ENCODE measurements at regions of chr11 and their contacts with region 1.

Region 1: GRCh38 chr11:65329944-65330403 is 3.7 kb upstream of the DPF2 start:
- DNase-seq: peak; percentile 51 to 79 (median 75)
- ATAC-seq: peak; percentile 52
- H3K4me3 ChIP-seq: no peak overlapping the region
- H3K4me3 Mint-ChIP-seq: peak overlapping the region in 3 of 10 donors; percentile 26 to 52 (median 51)
- H3K27ac ChIP-seq: no peak overlapping the region
- H3K27ac Mint-ChIP-seq: peak overlapping the region in 6 of 9 donors; percentile 32 to 81 (median 51)
- H3K4me1 ChIP-seq: peaks cover 7 to 14% of the 10 kb centered on the region in 2 donors
- H3K4me1 Mint-ChIP-seq: peaks cover 7 to 22% (median 17%) of the 10 kb centered on the region in 7 donors
- H3K27me3 ChIP-seq: no peaks in the 10 kb centered on the region
- H3K27me3 Mint-ChIP-seq: peaks cover 0 to 5% (median 0%) of the 10 kb centered on the region in 5 donors

Region 2: GRCh38 chr11:65204646-65205601 is 125.0 kb before region 1 on chr11:
- CTCF ChIA-PET with region 1: interaction called, 5 read pairs
- POLR2A ChIA-PET with region 1: no interaction called
- intact Hi-C with region 1: loop called in 1 of 2 experiments (anchors 1 kb)
- DNase-seq: peak in 8 of 9 donors; percentile 33 to 71 (median 52)
- ATAC-seq: peak; percentile 75
- H3K4me3 ChIP-seq: no peak overlapping the region
- H3K4me3 Mint-ChIP-seq: no peak overlapping the region
- H3K27ac ChIP-seq: no peak overlapping the region
- H3K27ac Mint-ChIP-seq: peak overlapping the region in 2 of 9 donors; percentile 30 to 65
- H3K4me1 ChIP-seq: no peaks in the 10 kb centered on the region
- H3K4me1 Mint-ChIP-seq: peaks cover 0 to 13% (median 5%) of the 10 kb centered on the region in 7 donors
- H3K27me3 ChIP-seq: no peaks in the 10 kb centered on the region
- H3K27me3 Mint-ChIP-seq: no peaks in the 10 kb centered on the region

Region 3: DNA sequence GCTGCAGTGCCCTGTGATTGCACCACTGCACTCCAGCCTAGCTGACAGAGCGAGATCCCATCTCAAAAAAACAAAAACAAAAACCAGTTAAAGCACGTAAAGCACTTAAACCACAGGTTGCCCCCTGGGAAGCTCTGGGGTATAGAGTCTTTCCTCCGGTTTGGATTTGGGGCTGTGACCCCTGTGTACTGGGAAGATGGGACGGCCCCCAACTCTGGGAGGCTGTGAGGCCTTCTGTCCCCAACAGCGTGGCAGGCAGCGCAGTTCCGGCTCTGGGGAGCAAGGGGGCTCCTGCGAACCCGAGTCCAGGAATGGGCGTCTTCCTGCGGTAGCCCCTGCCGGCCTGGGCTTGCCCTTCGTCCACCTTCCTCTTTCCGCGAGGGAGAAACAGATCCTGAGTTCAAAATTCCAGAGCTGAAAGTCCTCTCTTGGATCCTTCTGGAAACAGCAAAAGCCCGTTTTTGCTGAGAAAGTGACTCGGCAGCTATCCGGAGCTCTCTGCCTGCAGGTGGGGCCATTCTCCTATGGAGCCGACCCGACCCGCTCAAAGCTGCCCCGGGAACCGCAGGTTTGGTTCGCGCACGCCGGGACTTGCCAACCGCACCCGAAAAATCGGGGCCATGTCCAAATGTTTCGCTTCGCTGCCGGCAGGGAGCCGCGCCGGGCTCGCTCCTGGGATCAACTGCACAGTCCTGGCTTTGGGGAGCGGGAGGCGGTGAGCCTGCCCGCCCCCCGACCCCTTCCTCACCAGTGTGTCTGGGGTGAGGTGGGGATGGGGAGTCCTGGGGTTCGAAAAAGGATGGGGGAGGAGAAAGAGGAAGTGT is 104.5 kb before region 1 on chr11:
- CTCF ChIA-PET with region 1: interaction called, 19 read pairs
- POLR2A ChIA-PET with region 1: no interaction called
- intact Hi-C with region 1: loop called (anchors 1 kb)
- DNase-seq: peak; percentile 26 to 67 (median 56)
- ATAC-seq: peak; percentile 82
- H3K4me3 ChIP-seq: peak overlapping the region; percentile 48
- H3K4me3 Mint-ChIP-seq: peak overlapping the region; percentile 76 to 86 (median 79)
- H3K27ac ChIP-seq: no peak overlapping the region
- H3K27ac Mint-ChIP-seq: no peak overlapping the region
- H3K4me1 ChIP-seq: peaks cover 0 to 5% of the 10 kb centered on the region in 2 donors
- H3K4me1 Mint-ChIP-seq: peaks cover 6 to 15% (median 8%) of the 10 kb centered on the region in 7 donors
- H3K27me3 ChIP-seq: peaks cover 0 to 3% of the 10 kb centered on the region in 2 donors
- H3K27me3 Mint-ChIP-seq: peaks cover 12 to 39% (median 18%) of the 10 kb centered on the region in 5 donors

Region 4: DNA sequence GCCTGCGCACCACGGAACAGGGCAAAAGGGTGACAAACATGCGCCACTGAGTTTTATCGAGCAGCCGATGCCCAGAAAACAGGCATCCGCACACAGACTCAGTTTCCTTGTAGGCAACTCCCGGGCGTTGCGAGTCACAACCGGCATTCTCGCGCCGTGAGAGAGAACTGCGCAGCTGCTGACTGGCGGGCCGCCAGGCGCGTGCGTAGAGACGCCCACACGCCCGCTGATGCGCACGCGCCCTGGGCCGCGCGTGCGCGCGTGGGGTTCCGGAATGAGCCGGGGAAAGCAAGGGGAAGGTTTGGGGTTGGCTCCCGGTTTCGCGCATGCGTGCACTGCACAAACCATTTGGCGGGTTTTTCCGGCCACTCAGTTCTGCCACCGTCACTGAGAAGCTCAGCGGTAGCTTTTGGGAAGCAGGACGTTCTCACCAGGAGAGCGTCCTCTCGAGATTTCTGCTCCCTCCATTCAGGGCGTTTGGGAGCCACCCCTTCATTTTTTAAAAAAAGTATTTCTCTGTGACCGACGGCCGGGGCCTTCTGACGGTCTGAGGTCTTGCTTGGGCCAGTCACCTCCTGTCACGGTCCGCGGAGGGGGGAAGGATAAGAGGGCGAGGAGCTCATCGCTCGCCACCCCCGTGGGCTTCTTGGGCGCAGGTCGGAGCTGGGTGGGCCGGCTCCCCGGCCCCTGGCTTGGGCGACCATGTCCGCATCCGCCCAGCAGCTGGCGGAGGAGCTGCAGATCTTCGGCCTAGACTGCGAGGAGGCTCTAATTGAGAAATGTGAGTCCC is 68.2 kb before region 1 on chr11 and contains the start of gene POLA2:
- CTCF ChIA-PET with region 1: no interaction called
- POLR2A ChIA-PET with region 1: interaction called, 7 read pairs
- intact Hi-C with region 1: loop called in 1 of 2 experiments (anchors 1 kb)
- DNase-seq: peak; percentile 94 to 99 (median 98)
- ATAC-seq: peak; percentile 96
- H3K4me3 ChIP-seq: peak within 1 kb of the TSS; percentile 88
- H3K4me3 Mint-ChIP-seq: peak within 1 kb of the TSS; percentile 83 to 95 (median 92)
- H3K27ac ChIP-seq: peak within 1 kb of the TSS; percentile 88
- H3K27ac Mint-ChIP-seq: peak within 1 kb of the TSS; percentile 91 to 98 (median 97)
- H3K4me1 ChIP-seq: peaks cover 9 to 18% of the 10 kb centered on the region in 2 donors
- H3K4me1 Mint-ChIP-seq: peaks cover 20 to 62% (median 50%) of the 10 kb centered on the region in 7 donors
- H3K27me3 ChIP-seq: no peaks in the 10 kb centered on the region
- H3K27me3 Mint-ChIP-seq: peaks cover 0 to 2% (median 0%) of the 10 kb centered on the region in 5 donors
- total RNA-seq, gene POLA2: 13.4 to 51.6 (median 27.8) TPM

Region 5: GRCh38 chr11:65274735-65275682 is 55.0 kb before region 1 on chr11:
- CTCF ChIA-PET with region 1: interaction called, 15 read pairs
- POLR2A ChIA-PET with region 1: interaction called, 4 read pairs
- intact Hi-C with region 1: loop called (anchors 1 to 2 kb)
- DNase-seq: peak in 5 of 9 donors; percentile 22 to 31 (median 24)
- ATAC-seq: peak; percentile 78
- H3K4me3 ChIP-seq: no peak overlapping the region
- H3K4me3 Mint-ChIP-seq: no peak overlapping the region
- H3K27ac ChIP-seq: no peak overlapping the region
- H3K27ac Mint-ChIP-seq: no peak overlapping the region
- H3K4me1 ChIP-seq: no peaks in the 10 kb centered on the region
- H3K4me1 Mint-ChIP-seq: peaks cover 0 to 21% (median 4%) of the 10 kb centered on the region in 7 donors
- H3K27me3 ChIP-seq: no peaks in the 10 kb centered on the region
- H3K27me3 Mint-ChIP-seq: no peaks in the 10 kb centered on the region

Region 6: GRCh38 chr11:65314501-65315203 is 15.3 kb before region 1 on chr11 and contains the start of gene CDC42EP2:
- CTCF ChIA-PET with region 1: interaction called, 44 read pairs
- POLR2A ChIA-PET with region 1: interaction called, 22 read pairs
- intact Hi-C with region 1: loop called (anchors 1 kb)
- DNase-seq: peak; percentile 42 to 87 (median 56)
- ATAC-seq: peak; percentile 94
- H3K4me3 ChIP-seq: peak within 1 kb of the TSS; percentile 68
- H3K4me3 Mint-ChIP-seq: peak within 1 kb of the TSS; percentile 47 to 86 (median 76)
- H3K27ac ChIP-seq: peak within 1 kb of the TSS; percentile 59
- H3K27ac Mint-ChIP-seq: peak within 1 kb of the TSS in 3 of 9 donors; percentile 32 to 40 (median 38)
- H3K4me1 ChIP-seq: peaks cover 0 to 11% of the 10 kb centered on the region in 2 donors
- H3K4me1 Mint-ChIP-seq: peaks cover 0 to 13% (median 5%) of the 10 kb centered on the region in 7 donors
- H3K27me3 ChIP-seq: no peaks in the 10 kb centered on the region
- H3K27me3 Mint-ChIP-seq: peaks cover 0 to 12% (median 0%) of the 10 kb centered on the region in 5 donors
- total RNA-seq, gene CDC42EP2: 0.58 to 1.8 (median 0.89) TPM

Region 7: DNA sequence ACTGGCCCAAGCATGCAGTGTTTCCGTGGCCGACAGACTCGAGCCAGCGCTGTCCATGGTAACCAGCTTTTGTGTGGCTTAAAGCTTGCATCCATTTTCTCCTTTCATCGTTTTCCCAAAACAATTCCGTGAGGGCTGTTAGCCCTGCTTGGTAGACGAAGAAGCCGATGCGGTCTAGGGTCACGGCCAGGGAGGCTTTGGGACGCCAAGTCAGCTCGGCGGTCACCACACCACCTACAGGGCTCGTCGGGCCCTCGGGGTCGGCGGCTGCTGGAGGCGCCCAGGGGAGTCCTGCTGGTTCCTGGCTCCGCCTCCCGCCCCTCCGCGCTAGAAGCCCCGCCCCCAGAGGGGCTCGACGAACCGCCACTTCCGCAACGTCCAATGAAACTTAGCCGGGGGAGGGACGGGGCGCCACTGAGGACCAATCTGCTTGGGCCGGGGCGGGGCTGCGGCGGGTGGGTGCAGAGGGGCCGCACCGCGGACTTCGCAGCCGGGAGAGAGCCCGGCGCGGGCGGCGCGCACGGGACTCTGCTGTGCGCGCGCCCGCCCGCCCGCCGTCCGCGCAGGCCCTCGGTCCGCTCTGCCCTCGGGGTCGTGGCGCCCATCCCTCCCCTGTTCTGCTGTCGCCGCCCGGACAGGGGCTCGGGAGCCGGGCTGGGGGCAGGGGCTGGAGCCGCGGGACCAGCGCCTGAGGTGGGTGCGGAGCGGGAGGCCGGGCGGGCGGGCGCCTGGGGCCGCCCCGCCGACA is 24.5 kb after region 1 on chr11 and contains the start of gene TIGD3:
- CTCF ChIA-PET with region 1: interaction called, 6 read pairs
- POLR2A ChIA-PET with region 1: interaction called, 13 read pairs
- intact Hi-C with region 1: loop called (anchors 1 kb)
- DNase-seq: peak; percentile 84 to 96 (median 93)
- ATAC-seq: peak; percentile 99
- H3K4me3 ChIP-seq: peak within 1 kb of the TSS; percentile 68
- H3K4me3 Mint-ChIP-seq: peak within 1 kb of the TSS; percentile 90 to 97 (median 92)
- H3K27ac ChIP-seq: peak within 1 kb of the TSS; percentile 73
- H3K27ac Mint-ChIP-seq: peak within 1 kb of the TSS; percentile 75 to 94 (median 89)
- H3K4me1 ChIP-seq: peaks cover 5 to 9% of the 10 kb centered on the region in 2 donors
- H3K4me1 Mint-ChIP-seq: peaks cover 11 to 25% (median 19%) of the 10 kb centered on the region in 7 donors
- H3K27me3 ChIP-seq: no peaks in the 10 kb centered on the region
- H3K27me3 Mint-ChIP-seq: peaks cover 0 to 13% (median 0%) of the 10 kb centered on the region in 5 donors
- total RNA-seq, gene TIGD3: 0.39 to 2.0 (median 1.6) TPM

Region 8: GRCh38 chr11:65961232-65961901 is 631.4 kb after region 1 on chr11 and contains the start of gene SART1:
- CTCF ChIA-PET with region 1: no interaction called
- POLR2A ChIA-PET with region 1: no interaction called
- intact Hi-C with region 1: no loop called
- DNase-seq: peak; percentile 81 to 97 (median 94)
- ATAC-seq: peak; percentile 96
- H3K4me3 ChIP-seq: peak within 1 kb of the TSS; percentile 83
- H3K4me3 Mint-ChIP-seq: peak within 1 kb of the TSS; percentile 93 to 99 (median 98)
- H3K27ac ChIP-seq: peak within 1 kb of the TSS; percentile 96
- H3K27ac Mint-ChIP-seq: peak within 1 kb of the TSS; percentile 96 to 99 (median 98)
- H3K4me1 ChIP-seq: peaks cover 27 to 38% of the 10 kb centered on the region in 2 donors
- H3K4me1 Mint-ChIP-seq: peaks cover 23 to 64% (median 54%) of the 10 kb centered on the region in 7 donors
- H3K27me3 ChIP-seq: no peaks in the 10 kb centered on the region
- H3K27me3 Mint-ChIP-seq: no peaks in the 10 kb centered on the region
- total RNA-seq, gene SART1: 65.9 to 102 (median 90.8) TPM